Activated CD4-positive, alpha-beta T cell treated with anti-CD3 and anti-CD28 coated beads for 36 hours (primary cell): ENCODE measurements at regions of chr17 and their contacts with region 1.

Region 1: GRCh38 chr17:31900877-31901276 is 631 bp downstream of the UTP6 start:
- DNase-seq: no peak
- ATAC-seq: no peak
- H3K4me3 Mint-ChIP-seq: no peak overlapping the region
- H3K27ac Mint-ChIP-seq: no peak overlapping the region
- H3K4me1 Mint-ChIP-seq: peaks cover 17% of the 10 kb centered on the region
- H3K27me3 Mint-ChIP-seq: no peaks in the 10 kb centered on the region

Region 2: DNA sequence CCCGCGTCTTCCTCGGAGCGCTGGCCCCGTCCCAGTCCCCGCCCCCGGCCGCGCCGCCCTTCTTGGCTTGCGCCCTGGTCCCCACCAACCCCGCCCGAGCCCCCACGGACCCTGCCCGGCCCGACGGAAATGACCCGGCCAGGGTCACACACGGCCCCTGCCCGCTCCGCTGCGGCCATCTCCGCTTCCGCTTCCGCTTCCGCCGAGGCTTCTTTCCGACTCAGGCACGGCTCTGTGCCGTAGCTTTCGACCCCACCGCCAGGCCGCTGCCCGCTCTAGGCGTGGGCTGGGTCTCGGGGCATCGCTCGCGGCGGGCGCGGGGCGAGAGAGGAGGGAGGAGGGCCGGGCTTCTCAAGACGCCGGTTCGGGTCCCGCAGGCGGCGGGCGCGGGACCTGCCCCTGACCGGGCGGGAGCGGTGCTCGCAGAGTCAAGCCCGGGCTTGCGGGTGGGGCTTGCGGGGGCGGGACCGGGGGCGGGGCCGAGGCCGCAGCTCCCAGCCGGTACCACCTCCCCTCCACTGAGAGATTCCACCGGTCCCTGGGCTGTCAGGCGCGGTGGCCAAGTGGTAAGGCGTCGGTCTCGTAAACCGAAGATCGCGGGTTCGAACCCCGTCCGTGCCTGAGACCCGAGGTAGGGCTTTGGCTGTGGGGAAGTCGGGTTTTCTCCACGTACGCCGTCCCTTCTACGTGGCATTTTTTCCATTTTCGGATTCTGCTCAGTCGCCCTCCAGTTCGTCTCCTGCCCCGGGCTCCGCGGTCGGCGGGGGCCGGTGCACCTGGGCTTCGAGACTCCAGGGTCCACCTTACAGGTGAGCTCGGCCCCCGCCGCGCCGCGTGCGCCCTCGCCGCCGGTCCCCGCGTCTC is 351.1 kb before region 1 on chr17:
- CTCF ChIA-PET with region 1: no interaction called
- POLR2A ChIA-PET with region 1: no interaction called
- intact Hi-C with region 1: loop called in 1 of 2 experiments (anchors 1 kb)
- DNase-seq: peak; percentile 95
- ATAC-seq: peak; percentile 81
- H3K4me3 Mint-ChIP-seq: peak overlapping the region; percentile 88
- H3K27ac Mint-ChIP-seq: peak overlapping the region; percentile 82
- H3K4me1 Mint-ChIP-seq: peaks cover 17% of the 10 kb centered on the region
- H3K27me3 Mint-ChIP-seq: no peaks in the 10 kb centered on the region

Region 3: DNA sequence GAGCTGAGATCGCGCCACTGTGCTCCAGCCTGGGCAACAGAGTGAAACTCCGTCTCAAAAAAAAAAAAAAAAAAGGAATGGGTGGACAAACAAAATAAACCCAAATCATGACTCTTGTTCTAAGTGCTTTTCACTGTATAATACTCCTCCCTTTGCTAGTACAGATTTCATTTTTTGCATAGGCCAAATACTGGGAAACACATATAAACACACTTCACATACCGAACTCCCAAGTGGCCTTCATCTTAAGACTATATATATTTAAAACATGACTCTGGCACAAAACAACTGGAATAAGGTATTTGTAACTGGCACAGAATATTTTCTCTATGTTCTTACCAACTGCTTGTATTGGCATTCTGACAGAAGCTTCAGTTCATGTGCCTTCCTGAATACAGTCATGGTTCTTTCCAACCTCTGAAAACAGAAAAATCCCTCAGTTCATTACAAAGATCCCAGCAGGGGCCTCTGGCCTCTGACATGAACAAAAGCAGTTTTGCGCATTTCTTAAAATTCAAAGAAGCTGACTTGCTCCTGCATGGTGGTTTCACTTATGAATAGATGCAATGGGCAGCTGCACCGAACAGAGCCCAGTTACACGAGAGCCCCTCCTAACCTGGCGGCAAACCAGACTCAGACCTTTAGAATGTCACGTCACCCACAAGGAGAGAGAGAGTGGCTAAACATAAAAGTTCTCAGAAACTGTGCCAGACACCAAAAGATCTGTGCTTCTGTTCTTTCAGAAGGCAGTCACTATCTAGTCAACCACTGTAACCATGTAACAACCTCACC is 22.8 kb before region 1 on chr17:
- CTCF ChIA-PET with region 1: interaction called, 3 read pairs
- POLR2A ChIA-PET with region 1: interaction called, 7 read pairs
- intact Hi-C with region 1: loop called (anchors 1 kb)
- DNase-seq: peak; percentile 63
- ATAC-seq: peak; percentile 89
- H3K4me3 Mint-ChIP-seq: peak overlapping the region; percentile 23
- H3K27ac Mint-ChIP-seq: peak overlapping the region; percentile 94
- H3K4me1 Mint-ChIP-seq: peaks cover 25% of the 10 kb centered on the region
- H3K27me3 Mint-ChIP-seq: no peaks in the 10 kb centered on the region

Region 4: GRCh38 chr17:31931756-31932155 is 30.9 kb after region 1 on chr17:
- CTCF ChIA-PET with region 1: interaction called, 3 read pairs
- POLR2A ChIA-PET with region 1: interaction called, 11 read pairs
- intact Hi-C with region 1: loop called in 1 of 2 experiments (anchors 2 kb)
- DNase-seq: no peak
- ATAC-seq: no peak
- H3K4me3 Mint-ChIP-seq: no peak overlapping the region
- H3K27ac Mint-ChIP-seq: no peak overlapping the region
- H3K4me1 Mint-ChIP-seq: peaks cover 7% of the 10 kb centered on the region
- H3K27me3 Mint-ChIP-seq: no peaks in the 10 kb centered on the region

Region 5: GRCh38 chr17:32142038-32142856 is 241.4 kb after region 1 on chr17 and contains the start of gene RHOT1:
- CTCF ChIA-PET with region 1: interaction called, 10 read pairs
- POLR2A ChIA-PET with region 1: no interaction called
- intact Hi-C with region 1: loop called in 1 of 2 experiments (anchors 1 kb)
- DNase-seq: peak; percentile 85
- ATAC-seq: peak; percentile 64
- H3K4me3 Mint-ChIP-seq: peak within 1 kb of the TSS; percentile 99
- H3K27ac Mint-ChIP-seq: peak within 1 kb of the TSS; percentile 67
- H3K4me1 Mint-ChIP-seq: peaks cover 27% of the 10 kb centered on the region
- H3K27me3 Mint-ChIP-seq: no peaks in the 10 kb centered on the region
- total RNA-seq, gene RHOT1: 23.3 to 34.1 TPM

Region 6: DNA sequence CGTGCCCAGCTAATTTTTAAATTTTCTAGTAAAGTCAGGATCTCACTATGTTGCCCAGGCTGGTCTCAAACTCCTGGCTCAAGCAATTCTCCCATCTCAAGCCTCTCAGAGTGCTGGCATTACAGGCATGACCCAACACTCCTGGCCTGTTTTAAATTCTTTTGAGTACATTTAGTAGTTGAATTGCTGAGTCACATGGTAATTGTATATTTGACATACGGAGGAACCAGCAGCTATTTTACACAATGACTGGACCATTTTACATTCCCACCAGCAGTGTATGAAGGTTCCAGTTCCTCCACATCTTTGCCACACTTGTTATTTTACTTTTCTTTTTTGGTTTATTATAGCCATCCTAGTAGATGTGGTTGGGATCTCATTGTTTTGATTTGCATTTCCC is 285.0 kb after region 1 on chr17:
- CTCF ChIA-PET with region 1: no interaction called
- POLR2A ChIA-PET with region 1: no interaction called
- intact Hi-C with region 1: no loop called
- DNase-seq: no peak
- ATAC-seq: no peak
- H3K4me3 Mint-ChIP-seq: no peak overlapping the region
- H3K27ac Mint-ChIP-seq: no peak overlapping the region
- H3K4me1 Mint-ChIP-seq: no peaks in the 10 kb centered on the region
- H3K27me3 Mint-ChIP-seq: no peaks in the 10 kb centered on the region